Panc1 (cell line): ENCODE measurements at regions of chr3 and their contacts with region 1.

Region 1: DNA sequence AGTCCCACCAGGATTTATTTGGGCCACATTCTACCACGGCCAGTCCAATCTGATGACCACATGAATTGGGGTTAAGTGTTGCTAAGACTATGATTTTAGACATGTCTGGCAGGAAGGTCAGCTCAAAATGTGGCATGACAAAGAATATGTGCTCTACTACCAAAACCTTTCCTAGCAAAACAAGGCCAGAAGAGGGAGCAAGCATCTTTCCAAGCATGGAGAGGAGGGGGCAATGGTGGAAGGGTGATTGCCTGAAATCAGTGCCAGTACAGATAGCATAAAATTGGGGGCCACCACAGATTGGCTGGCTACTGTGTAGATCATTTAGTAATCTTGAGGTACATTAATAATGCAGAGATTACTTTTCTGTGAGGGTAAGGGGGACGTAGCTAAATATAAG is 43.2 kb downstream of the TMEM39A start:
- DNase-seq: no peak
- ATAC-seq: no peak
- H3K4me3 ChIP-seq: no peak overlapping the region
- H3K27ac ChIP-seq: no peak overlapping the region
- H3K4me1 ChIP-seq: no peaks in the 10 kb centered on the region
- H3K27me3 ChIP-seq: no peaks in the 10 kb centered on the region
- CTCF ChIP-seq: peak; percentile 44

Region 2: GRCh38 chr3:119443179-119443578 is 23.0 kb after region 1 on chr3:
- CTCF ChIA-PET with region 1: no interaction called
- POLR2A ChIA-PET with region 1: interaction called, 16 read pairs
- in situ Hi-C with region 1: no loop called
- intact Hi-C with region 1: no loop called
- DNase-seq: no peak
- ATAC-seq: no peak
- H3K4me3 ChIP-seq: no peak overlapping the region
- H3K27ac ChIP-seq: no peak overlapping the region
- H3K4me1 ChIP-seq: no peaks in the 10 kb centered on the region
- H3K27me3 ChIP-seq: no peaks in the 10 kb centered on the region
- CTCF ChIP-seq: no peak

Region 3: DNA sequence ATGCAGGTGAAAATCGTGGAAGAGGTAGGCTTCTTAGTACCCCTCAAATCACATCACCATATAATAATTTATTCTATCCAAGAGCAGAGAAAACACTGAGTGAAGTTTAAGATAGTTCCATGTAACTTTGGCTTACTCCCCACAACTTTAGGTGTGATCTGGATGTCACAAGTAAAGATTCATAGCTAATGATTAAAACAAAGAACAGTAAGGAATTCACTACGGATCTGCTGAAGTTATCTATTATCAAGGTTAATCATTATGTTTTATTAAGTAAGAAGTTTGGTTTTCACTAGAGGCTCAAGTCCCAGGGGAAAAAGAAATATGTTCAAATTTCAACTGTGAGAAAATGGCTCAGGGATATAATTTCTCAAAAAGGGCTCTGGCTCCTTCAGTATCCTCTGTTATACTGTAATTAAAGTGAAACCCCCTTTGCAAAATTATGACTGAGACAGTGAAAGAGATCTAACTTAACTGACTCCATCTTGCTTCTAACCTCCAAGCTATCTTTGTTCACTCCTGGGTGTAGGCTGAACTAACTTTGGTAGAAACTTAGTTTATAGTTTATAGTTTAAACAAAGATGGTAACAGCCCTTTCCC is 122.1 kb after region 1 on chr3:
- CTCF ChIA-PET with region 1: no interaction called
- POLR2A ChIA-PET with region 1: no interaction called
- in situ Hi-C with region 1: no loop called
- intact Hi-C with region 1: no loop called
- DNase-seq: no peak
- ATAC-seq: no peak
- H3K4me3 ChIP-seq: no peak overlapping the region
- H3K27ac ChIP-seq: no peak overlapping the region
- H3K4me1 ChIP-seq: no peaks in the 10 kb centered on the region
- H3K27me3 ChIP-seq: no peaks in the 10 kb centered on the region
- CTCF ChIP-seq: no peak

Region 4: GRCh38 chr3:119553823-119554415 is 133.7 kb after region 1 on chr3:
- CTCF ChIA-PET with region 1: no interaction called
- POLR2A ChIA-PET with region 1: interaction called, 26 read pairs
- in situ Hi-C with region 1: no loop called
- intact Hi-C with region 1: no loop called
- DNase-seq: no peak
- ATAC-seq: peak; percentile 43
- H3K4me3 ChIP-seq: no peak overlapping the region
- H3K27ac ChIP-seq: no peak overlapping the region
- H3K4me1 ChIP-seq: no peaks in the 10 kb centered on the region
- H3K27me3 ChIP-seq: no peaks in the 10 kb centered on the region; the same call in 1 of the 2 replicates
- CTCF ChIP-seq: no peak